PC-9 (cell line): ENCODE measurements at regions of chr9 and their contacts with region 1.

Region 1: DNA sequence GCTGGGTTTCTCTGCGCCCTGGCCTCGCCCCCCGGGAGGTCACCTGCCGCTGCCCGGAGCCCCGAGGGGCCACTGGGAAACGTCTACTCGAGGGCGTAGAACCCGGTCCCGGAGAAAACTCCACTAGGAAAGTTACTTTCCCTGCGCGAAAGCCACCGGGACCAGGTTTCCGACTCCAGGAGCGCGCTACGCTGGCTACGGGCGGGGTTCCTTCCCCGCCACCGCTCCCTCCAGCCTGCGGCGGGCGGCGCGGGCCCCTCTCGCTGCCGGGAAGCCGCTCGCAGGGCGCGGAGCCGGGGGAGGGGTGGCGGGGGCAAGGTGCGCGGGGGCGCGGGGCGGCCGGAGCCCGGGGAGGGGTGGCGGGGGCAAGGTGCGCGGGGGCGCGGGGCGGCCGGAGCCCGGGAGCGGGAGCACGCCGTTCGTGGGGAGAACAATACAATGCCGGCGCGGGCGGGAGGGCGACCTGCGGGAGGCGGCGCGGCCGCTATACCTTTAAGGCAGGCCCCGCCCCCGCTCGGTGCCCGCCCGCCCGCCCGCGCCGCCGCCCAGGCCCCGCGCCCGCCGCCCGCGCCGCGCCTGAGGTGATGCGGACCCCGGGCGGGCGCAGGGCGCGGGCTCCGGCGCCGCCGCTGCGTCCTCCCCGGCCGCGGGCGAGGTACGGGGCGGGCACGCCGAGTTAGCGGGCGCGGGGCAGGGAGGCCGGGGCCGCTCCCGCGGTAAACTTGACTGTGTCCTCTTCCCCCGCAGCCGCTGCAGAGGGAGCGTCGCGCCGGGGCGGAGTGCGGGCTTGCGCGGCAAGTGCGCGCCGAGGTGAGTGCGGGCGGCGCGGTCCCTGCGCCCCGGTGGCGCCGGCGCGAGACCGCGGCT is 278.1 kb downstream of the AOPEP start:
- DNase-seq: peak in 1 of 2 experiments; percentile 65
- H3K4me3 ChIP-seq: peak overlapping the region; percentile 91
- H3K27ac ChIP-seq: peak overlapping the region; percentile 90
- H3K4me1 ChIP-seq: peaks cover 46% of the 10 kb centered on the region
- H3K27me3 ChIP-seq: no peaks in the 10 kb centered on the region
- CTCF ChIP-seq: no peak

Region 2: DNA sequence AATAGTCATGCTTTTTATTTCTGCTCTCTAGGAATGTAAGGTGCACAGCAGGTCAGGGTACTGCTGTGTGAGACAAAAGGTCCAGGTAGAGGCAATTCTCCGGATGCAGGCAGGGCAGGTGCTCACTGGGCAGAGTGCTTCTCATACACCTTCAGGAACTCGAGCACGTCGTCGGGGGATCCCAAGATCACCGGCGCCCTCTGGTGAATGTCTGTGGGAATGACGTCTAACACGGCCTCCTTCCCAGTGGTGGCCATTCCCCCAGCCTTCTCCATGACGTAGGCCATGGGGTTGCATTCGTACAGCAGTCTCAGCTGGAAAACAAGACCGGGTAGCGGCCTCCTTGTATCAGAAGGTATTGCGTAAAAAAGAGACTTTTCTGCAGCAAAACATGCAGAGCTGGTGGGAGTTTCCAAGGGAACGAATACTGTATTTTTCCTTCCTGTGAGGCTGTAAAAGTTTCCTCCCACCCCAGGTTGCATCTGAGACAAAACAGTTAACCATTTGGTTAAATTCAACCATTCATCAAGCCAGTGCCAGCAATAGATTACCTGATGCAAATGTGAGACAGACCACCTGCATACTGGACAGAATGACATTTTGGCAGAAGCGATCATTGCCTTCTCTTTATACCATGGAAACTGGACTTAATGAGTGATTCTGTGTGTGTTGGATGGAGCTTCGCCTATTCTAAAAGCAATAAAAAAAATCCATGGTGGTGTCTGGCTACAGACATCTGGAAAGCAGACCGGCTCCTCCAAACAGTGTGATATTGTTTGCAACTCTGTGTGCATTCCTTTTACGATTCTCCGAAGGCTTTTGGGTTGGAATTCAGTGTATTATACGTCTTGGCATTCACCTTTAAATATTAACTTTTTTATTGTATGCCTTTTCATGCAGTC is 401.1 kb before region 1 on chr9:
- CTCF ChIA-PET with region 1: no interaction called
- POLR2A ChIA-PET with region 1: interaction called, 10 read pairs
- intact Hi-C with region 1: no loop called
- DNase-seq: peak; percentile 45 to 73
- H3K4me3 ChIP-seq: no peak overlapping the region
- H3K27ac ChIP-seq: no peak overlapping the region
- H3K4me1 ChIP-seq: no peaks in the 10 kb centered on the region
- H3K27me3 ChIP-seq: no peaks in the 10 kb centered on the region
- CTCF ChIP-seq: peak; percentile 68

Region 3: DNA sequence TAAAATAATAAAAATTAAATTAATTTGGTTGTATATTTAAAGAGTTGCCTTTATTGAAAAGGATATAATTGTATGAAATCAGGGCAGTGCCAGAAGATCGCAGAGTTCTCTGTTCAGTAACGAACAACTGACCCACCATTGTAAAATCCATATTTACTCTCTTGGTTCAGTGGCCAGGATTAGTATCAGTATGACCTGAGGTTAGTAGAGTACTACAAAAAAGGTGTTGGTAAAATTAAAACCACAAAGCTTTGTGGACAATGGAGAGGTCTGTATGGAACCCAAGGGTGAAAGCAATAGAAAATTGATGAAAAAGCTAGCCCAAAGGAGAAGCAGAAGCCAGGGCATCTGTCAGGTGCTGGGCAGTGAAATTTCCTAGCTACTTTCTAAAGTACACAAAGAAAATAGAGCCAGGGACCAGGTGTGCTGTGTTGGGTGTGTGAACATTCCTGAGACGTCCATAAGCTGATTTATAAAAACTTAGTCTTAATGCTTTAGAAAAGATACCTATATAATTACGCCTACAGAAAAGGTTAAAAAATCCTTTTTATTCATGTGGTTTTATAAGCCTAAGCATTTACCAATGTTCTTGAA is 118.7 kb before region 1 on chr9:
- CTCF ChIA-PET with region 1: no interaction called
- POLR2A ChIA-PET with region 1: interaction called, 10 read pairs
- intact Hi-C with region 1: no loop called
- DNase-seq: no peak
- H3K4me3 ChIP-seq: no peak overlapping the region
- H3K27ac ChIP-seq: 0 out of 2 replicates have a peak overlapping the region, but pooled peaks have one; percentile 1
- H3K4me1 ChIP-seq: peaks cover 8% of the 10 kb centered on the region
- H3K27me3 ChIP-seq: no peaks in the 10 kb centered on the region
- CTCF ChIP-seq: no peak

Region 4: GRCh38 chr9:94929373-94929764 is 75.3 kb before region 1 on chr9:
- CTCF ChIA-PET with region 1: no interaction called
- POLR2A ChIA-PET with region 1: interaction called, 19 read pairs
- intact Hi-C with region 1: loop called (anchors 1 kb)
- DNase-seq: peak in 1 of 2 experiments; percentile 89
- H3K4me3 ChIP-seq: no peak overlapping the region
- H3K27ac ChIP-seq: no peak overlapping the region
- H3K4me1 ChIP-seq: peaks cover 26% of the 10 kb centered on the region
- H3K27me3 ChIP-seq: no peaks in the 10 kb centered on the region
- CTCF ChIP-seq: no peak